ENCODE measurements at regions of chr7 and their contacts with region 1.

Region 1: GRCh38 chr7:138002096-138002827 is 376 bp upstream of the CREB3L2 start:
- DNase-seq: peak; percentile 100
- H3K4me3 ChIP-seq: peak overlapping the region; percentile 58 to 96 (median 88)
- H3K27ac ChIP-seq: peak overlapping the region; percentile 81
- H3K4me1 ChIP-seq: peaks cover 37% of the 10 kb centered on the region
- H3K27me3 ChIP-seq: no peaks in the 10 kb centered on the region
- CTCF ChIP-seq: peak; percentile 77 to 96
- POLR2A ChIP-seq: no peak

Region 2: DNA sequence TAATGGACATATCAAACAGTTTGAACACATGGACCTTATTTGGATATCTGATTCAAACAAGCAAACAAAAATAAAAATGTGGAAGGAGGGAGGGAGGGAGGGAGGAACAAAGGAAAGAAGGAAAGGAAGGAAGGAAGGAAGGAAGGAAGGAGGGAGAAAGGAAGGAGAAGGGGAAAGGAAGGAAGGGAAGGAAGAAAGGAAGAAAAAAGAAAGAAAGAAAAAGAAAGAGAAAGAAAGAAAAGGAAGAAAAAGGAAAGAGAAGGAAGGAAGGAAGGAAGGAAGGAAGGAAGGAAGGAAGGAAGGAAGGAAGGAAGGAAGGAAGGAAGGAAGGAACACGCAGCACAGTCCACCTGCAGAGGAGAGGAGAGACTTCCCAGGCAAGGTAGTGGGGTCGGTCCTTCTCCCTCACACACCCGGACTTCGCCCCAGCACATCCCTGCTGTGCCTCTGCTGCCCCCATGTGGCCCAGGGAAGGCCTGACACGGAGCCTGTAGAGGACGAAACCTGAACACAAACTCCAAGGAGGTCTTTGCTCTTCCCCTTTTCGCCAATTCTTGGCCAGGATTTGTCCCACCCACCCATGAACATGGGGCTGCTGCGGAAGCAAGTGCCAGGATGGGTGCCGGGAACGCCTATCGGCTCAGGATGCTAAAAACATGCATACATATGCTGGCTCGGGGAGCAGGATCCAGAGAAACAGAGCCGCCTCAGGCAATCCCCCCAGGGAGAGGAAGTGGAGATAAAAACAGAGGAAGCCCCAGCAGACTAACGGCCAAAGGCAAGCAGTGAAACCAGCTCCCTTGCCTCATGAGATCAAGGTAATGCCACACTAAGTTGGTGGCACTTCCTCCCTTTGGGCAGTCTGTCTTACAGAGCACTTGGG is 103.2 kb before region 1 on chr7:
- CTCF ChIA-PET with region 1: interaction called, 360 read pairs
- POLR2A ChIA-PET with region 1: no interaction called
- dilution Hi-C with region 1: no loop called
- intact Hi-C with region 1: no loop called
- DNase-seq: peak; percentile 73
- H3K4me3 ChIP-seq: no peak overlapping the region
- H3K27ac ChIP-seq: no peak overlapping the region
- H3K4me1 ChIP-seq: peaks cover 2% of the 10 kb centered on the region
- H3K27me3 ChIP-seq: no peaks in the 10 kb centered on the region
- CTCF ChIP-seq: peak; percentile 91 to 98
- POLR2A ChIP-seq: no peak

Region 3: DNA sequence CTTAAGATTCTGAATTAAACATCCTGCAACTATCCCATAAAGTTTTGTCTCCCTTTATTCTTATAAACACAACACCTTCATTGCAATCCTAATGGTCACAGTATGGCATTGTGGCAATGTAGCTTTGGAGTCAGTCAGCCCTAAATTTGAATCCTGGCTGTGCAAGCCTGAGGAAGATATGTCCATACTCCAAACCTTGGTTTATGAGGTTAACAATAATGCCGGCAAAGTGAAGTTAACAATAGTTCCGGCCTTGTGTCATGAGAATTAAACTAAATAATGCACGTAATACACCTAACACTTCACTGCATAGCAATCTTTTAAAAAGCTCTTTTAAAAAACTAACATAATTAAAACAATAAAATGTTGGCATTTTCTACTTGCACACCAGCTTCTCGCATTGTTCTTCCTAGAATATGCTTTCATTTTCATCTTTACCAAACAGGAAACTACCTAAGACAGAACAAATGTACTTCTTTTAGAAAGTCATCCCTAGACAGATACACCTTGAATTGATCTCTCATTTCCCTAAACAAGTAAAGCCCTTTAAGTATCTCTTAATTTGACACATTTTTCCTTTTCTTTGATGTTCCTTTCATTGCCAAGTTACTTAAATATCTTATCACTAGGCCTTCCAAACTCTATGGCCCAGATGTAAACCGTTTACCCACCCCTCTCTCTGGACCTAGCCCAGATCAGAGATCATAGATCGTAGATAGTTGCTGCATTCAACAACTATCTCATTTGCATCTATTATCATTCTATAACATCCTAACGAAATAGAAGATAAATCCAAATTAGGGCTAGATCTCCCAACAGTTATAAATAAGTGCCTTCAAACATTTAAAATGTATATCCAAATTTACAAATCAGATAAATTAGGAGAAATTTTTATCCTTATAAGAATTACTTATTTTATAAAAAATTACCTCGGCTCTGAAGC is 67.0 kb before region 1 on chr7:
- CTCF ChIA-PET with region 1: interaction called, 10 read pairs
- POLR2A ChIA-PET with region 1: no interaction called
- dilution Hi-C with region 1: no loop called
- intact Hi-C with region 1: loop called (anchors 2 kb)
- DNase-seq: peak; percentile 21
- H3K4me3 ChIP-seq: no peak overlapping the region
- H3K27ac ChIP-seq: no peak overlapping the region
- H3K4me1 ChIP-seq: peaks cover 36% of the 10 kb centered on the region
- H3K27me3 ChIP-seq: no peaks in the 10 kb centered on the region
- CTCF ChIP-seq: no peak
- POLR2A ChIP-seq: no peak

Region 4: GRCh38 chr7:137978464-137979237 is 23.6 kb before region 1 on chr7:
- CTCF ChIA-PET with region 1: interaction called, 8 read pairs
- POLR2A ChIA-PET with region 1: interaction called, 3 read pairs
- dilution Hi-C with region 1: no loop called
- intact Hi-C with region 1: loop called (anchors 1 kb)
- DNase-seq: peak; percentile 95
- H3K4me3 ChIP-seq: no peak overlapping the region
- H3K27ac ChIP-seq: peak overlapping the region; percentile 74
- H3K4me1 ChIP-seq: peaks cover 32% of the 10 kb centered on the region
- H3K27me3 ChIP-seq: no peaks in the 10 kb centered on the region
- CTCF ChIP-seq: no peak
- POLR2A ChIP-seq: no peak

Region 5: GRCh38 chr7:138064856-138065357 is 62.6 kb after region 1 on chr7:
- CTCF ChIA-PET with region 1: no interaction called
- POLR2A ChIA-PET with region 1: no interaction called
- dilution Hi-C with region 1: no loop called
- intact Hi-C with region 1: no loop called
- DNase-seq: no peak
- H3K4me3 ChIP-seq: no peak overlapping the region
- H3K27ac ChIP-seq: no peak overlapping the region
- H3K4me1 ChIP-seq: no peaks in the 10 kb centered on the region
- H3K27me3 ChIP-seq: no peaks in the 10 kb centered on the region
- CTCF ChIP-seq: no peak
- POLR2A ChIP-seq: no peak

Measured in endothelial cell of umbilical vein (primary cell).